ENCODE measurements at regions of chr5 and their contacts with region 1.

Region 1: DNA sequence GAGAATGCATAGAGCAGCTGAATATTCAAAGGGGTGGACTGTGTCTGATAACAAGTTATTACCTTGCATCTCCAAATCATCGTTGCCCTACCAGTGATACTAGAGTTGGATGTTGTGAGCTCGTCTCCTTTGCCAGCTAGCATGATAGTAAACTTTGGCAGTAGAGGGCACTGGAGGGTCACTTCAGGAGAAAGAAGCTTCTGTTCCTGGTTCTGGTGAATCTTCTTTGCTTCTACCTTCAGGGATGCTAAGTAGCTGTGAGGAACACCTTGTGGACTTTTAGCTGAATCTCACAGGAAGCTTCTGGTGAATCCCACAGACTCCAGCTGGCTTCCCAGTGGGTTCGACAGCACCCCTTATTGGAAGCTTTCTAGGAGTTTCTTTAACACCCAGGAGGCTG is 626.6 kb upstream of the SGCD start:
- DNase-seq: peak in 3 of 5 donors; percentile 2 to 49 (median 14)
- H3K4me3 ChIP-seq: no peak overlapping the region
- H3K4me3 Mint-ChIP-seq: no peak overlapping the region
- H3K27ac ChIP-seq: no peak overlapping the region
- H3K27ac Mint-ChIP-seq: peak overlapping the region in 1 of 8 donors; percentile 12
- H3K4me1 ChIP-seq: no peaks in the 10 kb centered on the region
- H3K4me1 Mint-ChIP-seq: peaks cover 0 to 4% (median 0%) of the 10 kb centered on the region in 3 donors
- H3K27me3 ChIP-seq: no peaks in the 10 kb centered on the region
- H3K27me3 Mint-ChIP-seq: no peaks in the 10 kb centered on the region

Region 2: GRCh38 chr5:155906046-155906445 is 205.7 kb after region 1 on chr5:
- CTCF ChIA-PET with region 1: interaction called, 14 read pairs
- POLR2A ChIA-PET with region 1: no interaction called
- DNase-seq: no peak
- H3K4me3 ChIP-seq: no peak overlapping the region
- H3K4me3 Mint-ChIP-seq: no peak overlapping the region
- H3K27ac ChIP-seq: no peak overlapping the region
- H3K27ac Mint-ChIP-seq: no peak overlapping the region
- H3K4me1 ChIP-seq: no peaks in the 10 kb centered on the region
- H3K4me1 Mint-ChIP-seq: no peaks in the 10 kb centered on the region
- H3K27me3 ChIP-seq: no peaks in the 10 kb centered on the region
- H3K27me3 Mint-ChIP-seq: peaks cover 3 to 4% of the 10 kb centered on the region in 2 donors

Measured in CD8-positive, alpha-beta memory T cell (primary cell).